Endothelial cell of umbilical vein (primary cell): ENCODE measurements at regions of chr9 and their contacts with region 1.

Region 1: GRCh38 chr9:624935-625500 is 216.5 kb upstream of the DMRT1 start:
- DNase-seq: peak; percentile 96
- H3K4me3 ChIP-seq: no peak overlapping the region
- H3K27ac ChIP-seq: no peak overlapping the region
- H3K4me1 ChIP-seq: peaks cover 14% of the 10 kb centered on the region
- H3K27me3 ChIP-seq: no peaks in the 10 kb centered on the region
- CTCF ChIP-seq: no peak
- POLR2A ChIP-seq: no peak

Region 2: DNA sequence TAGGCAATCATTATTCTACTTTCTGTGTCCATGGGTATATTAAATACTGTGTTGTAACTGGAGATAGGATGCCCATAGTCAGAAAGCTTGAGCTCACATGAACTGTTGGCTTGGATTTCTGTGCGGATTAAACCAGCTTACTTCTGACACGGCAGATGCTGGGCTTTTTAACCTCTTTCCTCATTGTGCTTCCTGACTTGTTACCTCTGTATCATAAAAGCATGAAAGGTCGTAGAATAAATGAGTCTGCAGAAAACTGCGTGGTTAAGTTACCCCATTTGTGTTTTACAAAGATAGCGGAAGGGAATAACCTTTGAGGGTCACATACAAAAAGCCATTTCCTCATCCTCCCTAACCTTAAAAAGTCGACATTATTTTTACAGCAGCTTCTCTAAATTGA is 17.0 kb after region 1 on chr9:
- CTCF ChIA-PET with region 1: interaction called, 3 read pairs
- POLR2A ChIA-PET with region 1: no interaction called
- dilution Hi-C with region 1: no loop called
- intact Hi-C with region 1: loop called (anchors 2 kb)
- DNase-seq: peak; percentile 60
- H3K4me3 ChIP-seq: no peak overlapping the region
- H3K27ac ChIP-seq: no peak overlapping the region
- H3K4me1 ChIP-seq: no peaks in the 10 kb centered on the region
- H3K27me3 ChIP-seq: no peaks in the 10 kb centered on the region
- CTCF ChIP-seq: no peak
- POLR2A ChIP-seq: no peak